GM10248 (cell line): ENCODE measurements at regions of chr2 and their contacts with region 1.

Region 1: DNA sequence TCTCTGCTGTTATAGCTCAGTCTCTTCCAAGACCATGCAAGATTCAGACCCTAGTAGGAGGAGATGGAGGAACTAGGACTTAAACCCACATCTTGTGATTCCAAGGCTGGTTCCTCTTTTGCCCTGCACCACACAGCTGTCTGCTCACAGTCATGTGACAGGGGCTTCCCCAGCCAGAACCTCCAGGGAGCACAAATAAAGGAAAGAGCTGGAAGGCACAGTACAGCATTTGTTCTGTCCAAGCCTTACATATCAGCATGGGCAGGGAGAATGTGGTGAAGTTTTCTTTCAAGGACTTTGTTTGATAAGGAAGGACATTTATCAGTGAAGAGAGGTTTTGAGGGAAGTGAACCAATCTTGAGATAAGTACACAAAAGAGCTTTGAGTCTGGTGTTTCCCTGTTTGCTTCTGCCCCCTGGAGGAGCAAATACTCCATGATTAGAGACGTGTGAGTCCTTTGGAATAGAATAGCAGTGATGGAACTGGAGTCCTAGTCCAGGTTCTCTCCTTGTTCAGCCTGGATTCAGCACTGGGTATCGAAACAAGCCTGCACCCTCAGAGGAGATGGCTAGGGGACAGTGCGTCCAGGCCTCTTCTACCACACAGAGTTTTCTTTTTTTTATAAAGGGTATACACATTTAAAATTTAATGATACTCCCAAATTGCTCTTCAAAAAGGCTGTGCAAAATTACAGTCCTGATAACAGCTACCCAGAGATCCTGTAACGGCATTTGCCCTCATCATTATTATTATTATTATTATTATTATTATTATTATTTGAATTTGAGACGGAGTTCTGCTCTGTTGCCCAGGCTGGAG is 24.6 kb upstream of the CASP10 start:
- DNase-seq: peak; percentile 63
- CTCF ChIP-seq: peak; percentile 54

Region 2: DNA sequence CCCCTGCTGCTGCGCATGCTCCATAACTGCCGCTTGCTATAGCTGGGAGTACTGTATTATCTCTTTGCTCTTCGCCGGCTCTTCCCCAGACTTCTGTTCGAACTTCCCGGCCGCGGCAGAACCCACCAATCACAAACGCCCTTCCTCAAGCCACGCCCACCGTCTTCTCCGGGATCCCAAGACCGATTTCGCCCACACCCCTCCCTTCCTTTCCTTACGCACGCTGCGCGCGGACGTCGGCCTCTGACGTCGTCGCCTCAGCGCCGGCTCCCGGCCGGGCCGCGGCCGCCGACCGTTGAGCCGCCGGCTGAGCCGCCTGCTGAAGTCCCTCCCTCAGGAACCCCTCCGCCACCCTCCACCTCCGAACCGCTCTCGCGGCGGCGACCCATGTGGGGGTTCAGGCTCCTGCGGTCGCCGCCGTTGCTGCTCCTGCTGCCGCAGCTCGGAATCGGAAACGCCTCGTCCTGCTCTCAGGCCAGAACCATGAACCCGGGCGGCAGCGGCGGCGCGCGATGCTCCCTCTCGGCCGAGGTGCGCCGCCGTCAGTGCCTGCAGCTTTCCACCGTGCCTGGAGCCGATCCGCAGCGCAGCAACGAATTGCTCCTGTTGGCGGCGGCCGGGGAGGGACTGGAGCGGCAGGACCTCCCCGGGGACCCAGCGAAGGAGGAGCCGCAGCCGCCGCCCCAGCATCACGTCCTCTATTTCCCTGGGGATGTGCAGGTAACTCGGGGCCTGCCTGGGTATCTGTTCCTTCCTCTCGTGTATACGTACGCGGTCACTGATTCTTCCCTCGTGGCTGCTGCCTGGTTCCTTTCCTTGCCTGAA is 1247.1 kb before region 1 on chr2 and contains the start of gene C2orf69:
- CTCF ChIA-PET with region 1: no interaction called
- POLR2A ChIA-PET with region 1: no interaction called
- DNase-seq: peak; percentile 94
- CTCF ChIP-seq: no peak

Region 3: DNA sequence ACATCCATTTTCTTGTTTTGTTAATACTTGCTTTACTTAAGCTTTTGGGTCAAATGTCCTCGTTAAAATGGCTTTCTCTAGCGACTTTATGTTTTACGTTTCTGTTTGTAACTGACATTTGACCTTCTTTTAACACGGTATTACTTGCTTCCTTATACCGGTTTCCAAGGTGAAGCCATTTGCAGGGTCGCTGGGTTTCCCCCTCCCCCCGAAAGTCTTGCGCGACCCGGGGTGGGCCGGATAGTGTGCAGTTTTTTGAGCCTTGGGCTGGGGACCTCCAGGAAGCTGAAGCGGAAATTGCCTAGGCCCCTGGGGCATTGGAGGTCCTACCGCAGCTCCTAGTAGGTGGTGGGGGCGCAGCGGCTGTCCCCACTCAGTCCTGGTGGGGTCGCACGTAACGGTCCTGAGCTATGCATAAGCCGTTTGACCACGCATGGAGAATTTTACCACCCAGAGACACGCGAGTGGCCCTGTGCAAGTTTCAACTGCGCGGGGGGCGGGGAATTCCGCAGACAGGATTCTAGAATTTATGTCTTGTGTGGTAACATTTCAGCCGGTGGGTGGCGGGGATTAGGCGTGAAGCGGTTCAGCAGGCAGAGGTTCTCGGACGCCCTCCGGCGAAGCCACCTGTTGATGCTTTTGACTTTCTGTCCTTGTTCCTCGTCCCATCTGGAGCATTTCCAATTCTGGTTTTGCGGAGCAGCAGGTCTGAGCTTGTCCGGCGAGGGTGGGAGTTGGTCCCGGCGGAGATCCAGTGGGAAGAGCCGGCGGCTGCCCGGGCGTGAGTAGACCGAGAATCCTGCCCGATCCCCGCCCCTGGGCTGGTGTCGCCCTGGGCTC is 40.0 kb before region 1 on chr2:
- CTCF ChIA-PET with region 1: interaction called, 15 read pairs
- POLR2A ChIA-PET with region 1: interaction called, 3 read pairs
- DNase-seq: peak; percentile 73
- CTCF ChIP-seq: peak; percentile 39

Region 4: DNA sequence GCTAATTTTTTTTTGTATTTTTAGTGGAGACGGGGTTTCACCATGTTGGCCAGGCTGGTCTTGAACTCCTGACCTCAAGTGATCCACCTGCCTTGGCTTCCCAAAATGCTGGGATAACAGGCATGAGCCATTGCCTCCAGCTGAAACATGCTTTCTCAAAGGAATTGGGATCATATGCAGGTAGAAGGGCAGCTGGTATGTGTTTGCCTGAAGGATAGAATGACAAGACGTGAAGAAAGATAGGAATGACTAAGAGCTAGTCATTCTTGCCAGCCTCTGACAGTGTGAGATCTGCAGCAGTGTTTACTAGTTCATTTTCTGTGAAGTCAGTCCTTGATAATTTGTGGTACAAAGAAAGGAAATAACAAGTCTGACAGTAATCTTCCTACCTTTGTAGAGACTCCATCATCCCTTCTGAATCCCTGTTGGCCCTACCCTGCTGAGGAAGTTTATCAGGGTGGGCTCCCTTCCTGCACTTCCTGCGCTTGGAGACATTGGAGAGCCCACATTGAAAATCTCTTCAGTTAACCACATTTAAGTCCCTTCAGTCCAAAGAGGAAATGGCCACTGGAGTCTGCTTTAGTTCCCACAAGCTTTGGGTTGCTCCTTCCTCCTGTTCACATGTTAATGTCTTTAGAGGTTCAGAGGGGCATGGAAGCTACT is 27.7 kb before region 1 on chr2:
- CTCF ChIA-PET with region 1: interaction called, 20 read pairs
- POLR2A ChIA-PET with region 1: interaction called, 5 read pairs
- DNase-seq: no peak
- CTCF ChIP-seq: no peak

Region 5: DNA sequence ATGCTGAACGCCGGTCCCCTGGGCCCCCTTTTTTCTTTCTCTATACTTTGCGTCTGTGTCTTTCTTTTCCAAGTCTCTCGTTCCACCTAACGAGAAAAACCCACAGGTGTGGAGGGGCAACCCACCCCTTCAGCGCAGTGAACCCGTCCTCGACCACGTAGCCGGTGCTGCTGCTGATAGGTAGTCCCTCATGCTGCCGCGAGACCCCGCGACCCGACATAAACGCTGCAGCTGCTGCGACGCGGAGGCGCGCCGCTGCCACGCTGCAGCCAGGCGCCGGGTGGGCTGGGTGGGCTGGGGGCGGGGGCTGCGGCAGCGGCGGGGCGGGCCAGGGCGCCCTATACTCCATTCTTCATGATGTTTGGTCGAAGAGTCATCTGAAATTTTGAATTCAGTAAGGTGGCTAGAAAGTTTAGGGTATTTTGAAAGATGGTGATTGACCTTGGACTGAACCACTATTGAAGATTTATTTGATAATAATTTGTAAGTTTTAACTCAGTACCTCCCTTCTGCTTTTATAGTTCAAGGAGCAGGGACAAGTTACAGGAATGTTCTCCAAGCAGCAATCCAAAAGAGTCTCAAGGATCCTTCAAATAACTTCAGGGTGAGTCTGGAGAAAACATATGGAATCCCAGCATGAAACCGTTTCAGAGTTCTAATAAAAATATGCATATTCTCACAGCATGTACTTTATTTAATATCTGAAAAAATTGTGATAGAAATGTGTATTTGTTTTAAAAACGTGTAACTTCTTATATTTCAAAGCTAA is 18.3 kb before region 1 on chr2:
- CTCF ChIA-PET with region 1: interaction called, 54 read pairs
- POLR2A ChIA-PET with region 1: no interaction called
- DNase-seq: no peak
- CTCF ChIP-seq: no peak

Region 6: DNA sequence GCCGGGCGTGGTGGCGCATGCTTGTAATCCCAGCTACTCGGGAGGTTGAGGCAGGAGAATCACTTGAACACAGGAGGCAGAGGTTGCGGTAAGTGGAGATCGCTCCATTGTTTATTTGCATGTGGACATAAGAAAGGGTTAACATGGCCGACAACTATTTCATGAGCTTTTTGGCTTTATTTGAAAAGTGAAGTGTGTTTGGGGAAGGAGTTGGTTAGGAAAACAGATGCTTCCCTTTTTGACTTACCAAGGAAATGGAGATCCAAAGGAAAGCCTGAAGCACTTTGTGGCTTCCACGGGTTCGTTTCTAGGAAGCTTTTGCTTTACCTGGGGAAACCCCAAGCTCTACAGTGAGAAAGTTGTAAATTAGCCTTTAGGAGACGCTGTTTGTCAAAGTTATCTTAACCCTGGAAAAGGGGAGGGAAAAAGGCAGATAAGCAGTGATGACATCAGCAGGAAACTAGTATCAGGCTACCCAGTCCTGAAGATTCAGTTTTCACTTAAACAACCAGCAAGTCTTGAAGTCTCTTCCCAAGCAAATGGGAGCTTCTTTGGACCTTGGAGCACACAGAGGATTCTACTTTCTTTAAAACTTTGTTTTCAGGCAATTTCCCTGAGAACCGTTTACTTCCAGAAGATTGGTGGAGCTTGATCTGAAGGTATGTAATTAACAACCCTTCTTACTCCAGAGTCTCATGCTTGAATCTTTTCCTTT is 24.5 kb after region 1 on chr2 and contains the start of gene CASP10:
- CTCF ChIA-PET with region 1: interaction called, 16 read pairs
- POLR2A ChIA-PET with region 1: no interaction called
- DNase-seq: peak; percentile 67
- CTCF ChIP-seq: peak; percentile 62

Region 7: GRCh38 chr2:201194097-201194496 is 35.8 kb after region 1 on chr2:
- CTCF ChIA-PET with region 1: interaction called, 10 read pairs
- POLR2A ChIA-PET with region 1: no interaction called
- DNase-seq: peak; percentile 73
- CTCF ChIP-seq: no peak

Region 8: GRCh38 chr2:202238234-202239197 is 1080.2 kb after region 1 on chr2 and contains the start of gene SUMO1:
- CTCF ChIA-PET with region 1: no interaction called
- POLR2A ChIA-PET with region 1: interaction called, 10 read pairs
- DNase-seq: peak; percentile 93
- CTCF ChIP-seq: no peak